Astrocyte of the cerebellum (primary cell): ENCODE measurements at regions of chr19 and their contacts with region 1.

Region 1: DNA sequence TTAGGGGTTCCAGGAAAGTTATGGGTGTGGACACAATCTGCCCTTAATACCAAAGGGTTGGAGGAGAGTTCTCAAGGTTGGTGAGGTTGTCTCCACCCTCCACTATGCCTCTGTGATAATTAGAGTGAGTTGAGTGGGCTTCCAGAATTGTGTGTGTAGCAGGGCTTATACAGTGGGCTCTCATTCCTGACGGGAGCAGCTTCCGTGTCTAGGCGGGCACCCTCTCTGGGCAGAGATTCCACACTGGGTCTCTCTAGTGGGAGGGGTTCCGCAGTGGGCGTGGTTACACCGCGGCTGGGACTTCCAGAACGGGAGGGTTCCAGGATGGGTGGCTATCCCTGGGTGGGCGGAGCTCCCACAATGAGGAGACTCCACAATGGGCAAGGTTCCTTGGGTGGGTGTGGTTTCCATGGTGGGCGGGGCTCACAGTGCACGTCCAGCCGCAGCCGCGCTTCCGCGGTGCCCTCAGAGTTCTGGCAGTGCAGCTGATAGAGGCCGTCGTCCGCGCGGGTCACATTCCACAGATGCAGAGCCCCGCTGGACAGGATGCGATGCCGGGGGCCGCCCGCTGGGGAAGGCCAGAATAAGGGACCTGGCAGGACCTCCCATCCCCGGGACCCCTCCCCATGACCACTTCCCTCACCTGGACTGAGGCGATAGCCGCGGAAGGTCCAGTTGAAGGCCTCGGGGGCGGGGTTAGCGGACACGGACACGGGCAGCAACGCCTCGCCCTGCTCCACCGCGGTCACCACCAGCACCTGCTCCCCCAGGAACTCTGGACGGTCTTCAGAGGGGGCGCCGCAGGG is 8.4 kb downstream of the NPHS1 start:
- DNase-seq: no peak
- H3K4me3 ChIP-seq: no peak overlapping the region
- CTCF ChIP-seq: no peak

Region 2: DNA sequence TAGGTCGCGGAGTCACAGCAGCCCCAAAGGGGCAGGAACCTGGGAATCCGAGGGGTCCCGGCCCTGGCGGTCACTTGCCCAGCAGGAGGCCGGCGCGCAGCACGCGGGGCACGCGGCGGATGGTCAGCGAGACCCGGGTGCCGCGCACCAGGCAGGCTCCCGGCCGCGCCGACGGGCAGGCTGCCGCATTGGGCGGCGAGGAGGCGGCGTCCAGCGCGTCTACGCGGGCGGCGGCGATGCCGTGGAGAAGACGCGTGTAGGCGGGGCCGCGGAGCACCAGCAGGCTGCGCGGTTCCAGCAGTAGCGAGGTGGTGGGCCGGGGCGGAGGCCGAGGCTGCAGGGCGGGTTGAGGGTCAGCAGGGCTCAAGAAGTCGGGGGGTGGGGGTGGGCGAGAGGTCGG is 165.3 kb after region 1 on chr19:
- in situ Hi-C with region 1: loop called (anchors 5 kb)
- DNase-seq: no peak
- H3K4me3 ChIP-seq: peak overlapping the region; percentile 33
- CTCF ChIP-seq: no peak

Region 3: GRCh38 chr19:36073121-36073872 is 229.4 kb after region 1 on chr19:
- in situ Hi-C with region 1: no loop called
- DNase-seq: no peak
- H3K4me3 ChIP-seq: no peak overlapping the region
- CTCF ChIP-seq: no peak